ENCODE measurements at regions of chr2 and their contacts with region 1.

Region 1: DNA sequence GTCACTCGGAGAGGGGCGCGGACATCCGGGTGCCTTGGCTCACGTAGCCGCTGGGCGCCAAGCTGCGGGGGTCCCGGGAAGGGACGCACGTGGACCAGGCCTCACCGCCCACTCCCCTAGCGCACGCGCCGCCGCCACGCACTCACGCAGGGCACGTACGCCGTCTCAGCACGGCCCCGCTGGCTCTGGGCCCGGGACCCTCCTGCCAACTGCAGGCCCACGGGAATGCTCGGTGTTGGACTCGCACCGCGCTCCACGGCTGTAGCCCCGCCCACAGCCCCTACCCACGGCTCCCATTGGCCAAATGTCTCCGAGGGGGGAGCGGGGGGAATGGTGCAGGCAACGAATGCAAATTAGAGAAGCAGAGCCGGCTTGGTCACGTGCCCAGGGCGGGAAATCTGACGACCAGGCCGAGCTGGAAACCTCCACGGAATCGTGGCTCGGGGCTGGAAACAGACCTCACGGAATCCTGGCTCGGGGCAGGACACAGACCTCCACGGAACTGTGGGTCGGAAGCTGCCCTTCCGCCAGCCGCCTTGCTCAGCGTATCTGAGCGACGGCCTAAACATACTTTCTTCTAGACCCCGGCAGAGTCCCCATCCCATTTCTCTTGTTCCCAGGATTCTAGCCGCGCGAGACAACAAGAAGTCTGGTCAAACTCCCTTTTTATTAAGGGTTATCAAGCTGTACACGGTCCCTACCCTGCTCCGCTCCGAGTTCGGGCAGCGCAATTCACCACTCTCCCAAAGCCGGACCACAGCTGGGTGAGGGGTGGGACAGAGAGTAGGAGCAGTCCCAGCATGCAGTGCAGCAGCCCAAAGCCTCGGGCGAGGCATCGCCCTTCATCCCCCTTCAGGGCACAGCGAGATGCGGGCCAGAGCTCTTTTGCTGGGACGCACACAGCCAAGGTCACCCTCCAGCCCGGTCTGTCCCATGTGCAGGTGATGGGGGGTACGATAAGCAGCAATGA is at the start of gene ABCB6:
- DNase-seq: peak; percentile 98 to 99
- ATAC-seq: peak; percentile 95
- H3K4me3 ChIP-seq: peak within 1 kb of the TSS; percentile 1 to 31
- H3K27ac ChIP-seq: peak within 1 kb of the TSS in 1 of 2 donors; percentile 96
- H3K4me1 ChIP-seq: no peaks in the 10 kb centered on the region
- H3K27me3 ChIP-seq: no peaks in the 10 kb centered on the region
- total RNA-seq, gene ABCB6: 16.9 to 28.9 TPM

Region 2: GRCh38 chr2:219079417-219079816 is 139.6 kb before region 1 on chr2:
- intact Hi-C with region 1: no loop called
- DNase-seq: no peak
- ATAC-seq: no peak
- H3K4me3 ChIP-seq: no peak overlapping the region
- H3K27ac ChIP-seq: no peak overlapping the region
- H3K4me1 ChIP-seq: no peaks in the 10 kb centered on the region
- H3K27me3 ChIP-seq: no peaks in the 10 kb centered on the region

Region 3: GRCh38 chr2:219160186-219161017 is 58.6 kb before region 1 on chr2 and contains the start of gene NHEJ1:
- intact Hi-C with region 1: loop called in 1 of 2 experiments (anchors 2 kb)
- DNase-seq: peak; percentile 98 to 99
- ATAC-seq: peak; percentile 98
- H3K4me3 ChIP-seq: peak within 1 kb of the TSS; percentile 20 to 73
- H3K27ac ChIP-seq: peak within 1 kb of the TSS in 1 of 2 donors; percentile 83
- H3K4me1 ChIP-seq: no peaks in the 10 kb centered on the region
- H3K27me3 ChIP-seq: no peaks in the 10 kb centered on the region
- total RNA-seq, gene NHEJ1: 6.8 to 9.8 TPM

Region 4: DNA sequence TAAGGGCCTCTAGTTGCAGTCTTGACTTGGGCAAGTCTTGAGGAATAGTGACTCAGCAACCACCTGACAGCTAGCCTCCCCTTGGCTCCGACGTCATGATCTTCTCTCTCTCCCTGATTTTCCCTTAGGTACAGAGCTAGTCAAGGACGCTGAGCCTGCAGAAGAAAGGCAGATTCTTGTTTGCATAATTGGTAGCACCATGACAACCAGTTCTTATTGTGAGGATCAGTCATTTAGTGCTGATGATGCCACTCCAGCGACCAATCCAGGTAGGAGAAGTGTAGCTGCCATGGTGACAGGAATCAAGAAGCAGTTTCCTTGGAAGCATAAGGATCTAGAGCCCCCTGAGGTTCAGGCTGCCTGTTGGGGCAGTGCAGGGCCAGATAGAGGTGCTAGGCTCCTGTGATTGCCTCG is 116.4 kb after region 1 on chr2:
- intact Hi-C with region 1: no loop called
- DNase-seq: no peak
- ATAC-seq: no peak
- H3K4me3 ChIP-seq: no peak overlapping the region
- H3K27ac ChIP-seq: no peak overlapping the region
- H3K4me1 ChIP-seq: no peaks in the 10 kb centered on the region
- H3K27me3 ChIP-seq: no peaks in the 10 kb centered on the region